Thyroid gland (tissue), 4 donors: ENCODE measurements at regions of chr15 and their contacts with region 1.

Region 1: DNA sequence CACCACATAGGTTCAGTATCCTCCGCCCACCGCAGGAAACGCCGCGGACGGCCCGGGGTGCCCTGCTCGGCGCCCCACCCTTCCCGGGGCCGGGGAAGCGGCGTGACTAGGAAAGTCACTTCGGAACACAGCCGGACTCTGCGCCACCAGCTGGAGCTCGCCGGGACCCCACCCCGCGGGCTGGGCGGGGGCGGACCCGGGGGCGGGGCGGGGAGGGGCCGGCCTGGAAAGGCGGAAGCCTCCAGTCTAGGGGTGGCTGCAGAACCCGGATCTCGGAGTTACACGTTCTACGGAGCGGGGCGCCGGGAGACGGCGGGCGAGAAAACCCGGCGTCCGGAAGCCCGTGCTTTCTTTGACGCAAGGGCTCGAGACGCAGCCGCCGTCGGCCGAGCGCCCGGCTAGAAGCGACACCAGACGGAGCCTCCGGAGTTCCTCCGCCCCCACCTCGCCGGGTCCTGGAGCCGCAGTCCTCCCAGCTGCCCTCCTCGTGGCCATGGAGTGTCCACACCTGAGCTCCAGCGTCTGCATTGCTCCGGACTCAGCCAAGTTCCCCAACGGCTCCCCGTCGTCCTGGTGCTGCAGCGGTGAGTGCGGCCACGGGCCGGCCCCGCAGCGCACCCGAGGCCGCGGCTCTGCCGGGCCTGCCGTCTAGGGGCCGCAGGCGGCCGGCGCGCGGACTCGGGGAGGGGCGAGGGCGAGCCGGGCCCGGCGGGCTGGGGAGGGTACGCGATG is at the start of gene USP3:
- DNase-seq: peak; percentile 93 to 94
- H3K4me3 ChIP-seq: peak within 1 kb of the TSS; percentile 57 to 89 (median 79)
- H3K27ac ChIP-seq: peak within 1 kb of the TSS; percentile 87 to 95 (median 93)
- H3K4me1 ChIP-seq: peaks cover 31 to 55% of the 10 kb centered on the region in 2 donors
- H3K27me3 ChIP-seq: no peaks in the 10 kb centered on the region
- CTCF ChIP-seq: peak in 3 of 6 experiments; percentile 24 to 58 (median 45)
- POLR2A ChIP-seq: peak in 1 of 2 donors; percentile 89
- total RNA-seq, gene USP3: 42.9 to 82.2 (median 53.7) TPM

Region 2: DNA sequence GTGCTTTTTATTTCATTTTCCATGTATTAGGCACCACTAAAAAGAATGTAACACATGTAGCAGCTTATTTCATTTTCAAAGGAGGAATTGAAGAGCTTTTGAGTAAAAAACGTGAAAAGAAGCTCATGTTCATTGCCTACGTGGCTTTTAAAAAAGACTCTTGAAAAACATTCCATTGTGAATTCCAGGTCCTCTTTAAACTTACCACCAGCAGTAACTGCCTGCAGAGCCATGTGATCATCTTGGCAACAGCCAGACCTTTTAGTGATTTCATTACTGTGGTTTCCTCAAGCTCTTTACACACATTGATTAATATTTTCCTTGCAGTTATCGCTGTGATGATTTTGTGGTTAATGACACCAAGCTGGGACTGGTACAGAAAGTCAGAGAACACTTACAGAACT is 49.0 kb after region 1 on chr15:
- intact Hi-C with region 1: loop called (anchors 10 kb)
- DNase-seq: peak; percentile 67
- H3K4me3 ChIP-seq: no peak overlapping the region
- H3K27ac ChIP-seq: peak overlapping the region; percentile 83 to 96 (median 91)
- H3K4me1 ChIP-seq: peaks cover 26 to 30% of the 10 kb centered on the region in 2 donors
- H3K27me3 ChIP-seq: no peaks in the 10 kb centered on the region
- CTCF ChIP-seq: no peak
- POLR2A ChIP-seq: peak in 1 of 2 donors; percentile 28